Sciatic nerve (tissue), 2 donors: ENCODE measurements at regions of chr19 and their contacts with region 1.

Region 1: DNA sequence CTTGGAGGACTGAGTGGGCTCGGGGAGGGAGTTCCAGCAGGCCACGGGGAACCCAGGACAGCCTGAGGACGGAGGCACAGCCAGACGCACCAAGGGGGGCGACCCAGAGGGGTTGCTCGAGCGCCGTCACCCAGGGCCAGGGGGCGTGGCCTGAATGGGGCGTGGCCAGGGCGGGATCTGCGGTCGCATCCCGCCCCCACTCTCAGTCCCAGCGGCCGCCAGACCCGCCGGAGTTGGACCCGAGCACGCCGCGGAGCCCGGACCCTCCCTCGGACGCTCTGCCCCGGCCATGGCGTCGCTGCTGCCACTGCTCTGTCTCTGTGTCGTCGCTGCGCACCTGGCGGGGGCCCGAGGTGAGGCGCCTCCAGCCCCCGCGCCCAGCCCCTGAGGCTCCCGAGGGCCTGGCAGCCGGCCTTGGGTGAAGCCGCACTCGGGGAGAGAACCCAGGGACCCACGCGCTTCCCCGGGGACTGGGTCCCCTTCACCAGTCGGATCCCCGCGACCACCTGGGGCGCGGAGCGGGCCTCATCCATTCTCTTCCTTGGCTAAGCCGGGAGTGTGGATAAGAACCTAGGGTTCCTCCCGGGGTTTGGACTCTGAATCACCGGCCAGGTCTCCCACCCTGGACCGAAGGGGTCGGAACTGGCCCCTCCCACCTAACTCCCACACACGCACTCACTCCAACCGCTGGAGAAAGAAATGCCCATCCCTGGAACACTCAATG is at the start of gene CILP2:
- DNase-seq: no peak
- ATAC-seq: peak; percentile 7
- total RNA-seq, gene CILP2: 0.27 TPM

Region 2: DNA sequence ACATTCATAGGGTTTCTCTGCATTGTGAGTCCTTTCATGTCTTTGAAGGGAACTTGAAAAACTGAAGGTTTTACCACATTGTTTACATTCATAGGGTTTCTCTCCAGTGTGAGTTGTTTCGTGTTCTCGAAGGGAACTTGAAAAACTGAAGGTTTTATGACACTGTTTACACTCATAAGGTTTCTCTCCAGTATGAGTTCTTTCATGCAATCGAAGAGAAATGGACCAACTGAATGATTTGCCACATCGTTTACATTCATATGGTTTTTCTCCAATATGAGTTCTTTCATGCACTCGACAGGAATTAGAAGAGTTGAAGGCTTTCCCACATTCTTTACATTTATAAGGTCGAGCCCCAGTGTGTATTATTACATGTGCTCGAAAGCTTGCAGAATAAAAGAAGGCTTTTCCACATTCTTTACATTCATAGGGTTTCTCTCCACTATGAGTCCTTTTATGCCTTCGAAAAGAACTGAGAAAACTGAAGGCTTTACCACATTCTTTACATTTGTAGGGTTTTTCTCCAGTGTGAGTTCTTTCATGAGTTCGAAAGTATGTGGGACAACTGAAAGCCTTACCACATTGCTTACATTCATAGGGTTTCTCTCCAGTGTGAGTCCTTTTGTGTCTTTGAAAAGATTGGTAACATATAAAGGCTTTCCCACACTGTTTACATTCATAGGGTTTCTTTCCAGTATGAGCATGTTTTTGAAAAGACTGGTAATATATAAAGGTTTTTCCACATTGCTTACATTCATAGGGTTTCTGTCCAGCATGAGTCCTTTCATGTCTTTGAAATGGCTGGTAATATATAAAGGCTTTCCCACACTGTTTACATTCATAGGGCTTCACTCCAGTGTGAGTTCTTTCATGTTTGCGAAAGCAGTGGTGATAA is 174.0 kb after region 1 on chr19:
- intact Hi-C with region 1: no loop called
- DNase-seq: no peak
- ATAC-seq: no peak

Region 3: DNA sequence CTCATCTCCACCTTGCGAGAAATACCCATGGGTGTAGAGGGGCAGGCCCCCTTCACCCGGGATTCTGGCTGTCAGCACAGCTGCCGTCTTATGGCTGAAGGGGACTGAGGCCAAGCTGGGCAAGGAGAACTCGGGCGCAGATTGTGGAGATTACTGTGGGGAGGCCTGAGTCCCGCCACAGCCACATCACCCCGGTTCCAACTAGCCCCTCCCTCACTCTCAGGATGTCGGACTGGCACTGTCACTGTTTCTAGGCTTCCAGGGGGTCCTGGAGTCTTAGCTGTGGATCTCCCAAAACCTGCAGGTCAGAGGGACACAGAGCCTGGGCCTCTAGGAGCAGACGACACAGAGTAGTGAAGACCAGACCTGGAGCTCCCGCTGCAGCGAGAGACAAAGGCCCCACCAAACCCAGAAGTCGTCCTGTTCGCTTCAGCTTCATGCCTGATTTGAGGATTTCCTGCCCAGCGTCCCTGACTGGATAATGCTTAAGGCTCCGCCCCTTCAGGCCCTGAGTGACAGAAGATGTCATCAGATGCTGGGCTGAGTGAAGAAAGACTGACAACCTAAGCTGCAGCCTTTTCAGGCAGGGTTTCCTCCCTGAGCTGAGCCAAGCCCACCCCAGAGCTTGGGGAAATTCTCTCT is 418.3 kb after region 1 on chr19:
- intact Hi-C with region 1: loop called (anchors 5 kb)
- DNase-seq: no peak
- ATAC-seq: no peak